Naive thymus-derived CD4-positive, alpha-beta T cell (primary cell): ENCODE measurements at regions of chr7 and their contacts with region 1.

Region 1: DNA sequence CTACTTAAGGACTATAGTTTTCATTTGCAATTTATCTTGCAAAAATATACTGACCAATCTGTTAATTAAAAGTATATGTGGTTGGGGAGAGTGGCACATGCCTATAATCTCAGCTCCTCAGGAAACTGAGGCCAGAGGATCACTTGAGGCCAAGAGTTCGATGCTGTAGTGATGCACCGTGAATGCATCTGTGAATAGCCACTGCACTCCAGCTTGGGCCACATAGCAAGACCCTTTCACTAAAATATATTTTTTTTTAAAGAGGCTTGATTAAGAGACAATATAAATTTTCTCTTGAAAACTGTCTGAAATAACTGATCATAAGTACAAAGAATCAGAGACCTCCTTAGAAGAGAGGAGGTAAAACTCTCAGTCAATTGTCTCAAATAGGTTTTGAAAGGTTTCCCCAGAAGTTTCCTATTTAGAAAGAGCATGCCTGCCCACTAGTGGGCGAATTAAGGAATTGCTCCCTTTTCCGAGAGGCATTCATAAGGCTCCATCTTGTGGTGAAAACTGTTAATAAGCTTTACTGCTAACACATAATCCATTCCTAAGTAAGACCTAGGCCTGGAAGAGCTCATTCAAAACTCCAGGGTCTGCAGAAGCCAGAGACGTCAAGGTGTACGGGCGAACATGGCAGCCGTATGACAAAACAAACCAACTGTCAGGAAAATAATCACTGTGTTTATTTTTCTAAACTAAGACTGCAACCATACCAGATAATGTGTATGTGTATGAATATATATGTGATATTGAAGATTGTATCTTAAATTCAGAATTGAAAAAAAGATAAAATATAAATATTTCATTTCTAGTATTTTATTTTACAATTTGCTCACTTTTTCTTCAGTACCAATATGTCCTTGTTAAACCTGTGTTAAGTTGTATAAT is 6.8 kb upstream of the TAS2R40 start:
- DNase-seq: peak; percentile 26 to 81 (median 75)
- ATAC-seq: peak; percentile 99
- H3K4me3 ChIP-seq: no peak overlapping the region
- H3K4me3 Mint-ChIP-seq: no peak overlapping the region
- H3K27ac ChIP-seq: no peak overlapping the region
- H3K27ac Mint-ChIP-seq: peak overlapping the region in 1 of 9 donors; percentile 13
- H3K4me1 ChIP-seq: no peaks in the 10 kb centered on the region
- H3K4me1 Mint-ChIP-seq: no peaks in the 10 kb centered on the region
- H3K27me3 ChIP-seq: no peaks in the 10 kb centered on the region
- H3K27me3 Mint-ChIP-seq: peaks cover 0 to 21% (median 4%) of the 10 kb centered on the region in 5 donors

Region 2: DNA sequence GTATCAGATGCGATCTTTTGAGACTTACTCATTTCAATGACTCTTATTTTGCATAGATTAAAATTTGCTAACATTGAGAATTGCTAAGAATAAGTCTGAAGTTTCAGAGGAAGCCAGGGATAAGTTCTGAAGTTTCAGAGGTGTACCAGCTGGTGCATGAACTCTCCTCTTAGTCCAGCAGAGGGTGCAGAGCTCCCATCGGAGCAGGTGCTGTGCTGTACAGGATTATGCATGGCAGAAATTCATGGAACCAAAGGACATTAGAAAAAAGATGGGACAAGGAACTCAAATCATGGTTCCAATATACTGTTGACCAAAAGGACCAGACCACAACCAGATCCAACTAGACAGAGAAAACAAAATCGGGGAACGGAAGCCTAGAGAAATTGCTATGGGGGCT is 1061.6 kb before region 1 on chr7:
- CTCF ChIA-PET with region 1: no interaction called
- POLR2A ChIA-PET with region 1: no interaction called
- intact Hi-C with region 1: loop called in 1 of 2 experiments (anchors 2 kb)
- DNase-seq: no peak
- ATAC-seq: no peak
- H3K4me3 ChIP-seq: no peak overlapping the region
- H3K4me3 Mint-ChIP-seq: no peak overlapping the region
- H3K27ac ChIP-seq: no peak overlapping the region
- H3K27ac Mint-ChIP-seq: no peak overlapping the region
- H3K4me1 ChIP-seq: no peaks in the 10 kb centered on the region
- H3K4me1 Mint-ChIP-seq: no peaks in the 10 kb centered on the region
- H3K27me3 ChIP-seq: no peaks in the 10 kb centered on the region
- H3K27me3 Mint-ChIP-seq: peaks cover 0 to 15% (median 5%) of the 10 kb centered on the region in 5 donors

Region 3: GRCh38 chr7:142301923-142302550 is 913.0 kb before region 1 on chr7:
- CTCF ChIA-PET with region 1: interaction called, 10 read pairs
- POLR2A ChIA-PET with region 1: no interaction called
- intact Hi-C with region 1: loop called (anchors 1 to 5 kb)
- DNase-seq: peak in 1 of 9 donors; percentile 34
- ATAC-seq: no peak
- H3K4me3 ChIP-seq: no peak overlapping the region
- H3K4me3 Mint-ChIP-seq: peak overlapping the region in 2 of 10 donors; percentile 17 to 49
- H3K27ac ChIP-seq: no peak overlapping the region
- H3K27ac Mint-ChIP-seq: no peak overlapping the region
- H3K4me1 ChIP-seq: peaks cover 0 to 28% of the 10 kb centered on the region in 2 donors
- H3K4me1 Mint-ChIP-seq: peaks cover 7 to 52% (median 35%) of the 10 kb centered on the region in 7 donors
- H3K27me3 ChIP-seq: no peaks in the 10 kb centered on the region
- H3K27me3 Mint-ChIP-seq: peaks cover 4 to 25% (median 16%) of the 10 kb centered on the region in 5 donors

Region 4: GRCh38 chr7:142438235-142438922 is 776.7 kb before region 1 on chr7:
- CTCF ChIA-PET with region 1: no interaction called
- POLR2A ChIA-PET with region 1: no interaction called
- intact Hi-C with region 1: loop called in 1 of 2 experiments (anchors 10 kb)
- DNase-seq: peak in 4 of 9 donors; percentile 25 to 37 (median 31)
- ATAC-seq: peak; percentile 71
- H3K4me3 ChIP-seq: no peak overlapping the region
- H3K4me3 Mint-ChIP-seq: peak overlapping the region in 2 of 10 donors; percentile 0 to 4
- H3K27ac ChIP-seq: no peak overlapping the region
- H3K27ac Mint-ChIP-seq: peak overlapping the region in 2 of 9 donors; percentile 8 to 11
- H3K4me1 ChIP-seq: peaks cover 6 to 26% of the 10 kb centered on the region in 2 donors
- H3K4me1 Mint-ChIP-seq: peaks cover 39 to 70% (median 66%) of the 10 kb centered on the region in 7 donors
- H3K27me3 ChIP-seq: no peaks in the 10 kb centered on the region
- H3K27me3 Mint-ChIP-seq: no peaks in the 10 kb centered on the region

Region 5: DNA sequence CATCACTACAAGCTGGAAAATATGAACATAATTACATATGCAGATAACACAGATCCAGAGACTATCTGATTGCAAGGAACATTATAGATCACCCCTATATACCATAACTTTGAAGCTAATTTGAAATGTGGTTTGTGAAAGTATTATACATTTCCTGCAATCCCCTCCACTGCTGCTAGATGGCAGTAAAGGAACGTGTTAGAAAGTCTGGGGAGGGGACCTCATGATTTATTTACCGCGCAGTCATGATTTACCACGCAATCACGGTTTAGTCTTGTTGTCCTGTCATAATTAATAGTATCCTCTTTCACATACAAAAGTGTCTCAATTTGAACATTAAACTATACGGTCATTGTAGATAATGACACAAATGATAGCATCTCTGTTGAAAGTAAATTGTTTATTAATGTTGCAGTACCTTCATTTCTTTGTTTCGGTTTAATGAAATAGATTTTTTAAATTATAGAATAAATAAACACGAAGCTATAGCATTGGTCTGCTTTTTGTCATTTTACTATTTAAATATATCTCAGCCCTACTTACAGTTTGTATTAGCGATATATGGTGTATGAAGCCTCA is 611.1 kb before region 1 on chr7:
- CTCF ChIA-PET with region 1: interaction called, 9 read pairs
- POLR2A ChIA-PET with region 1: no interaction called
- intact Hi-C with region 1: loop called (anchors 1 to 2 kb)
- DNase-seq: peak in 8 of 9 donors; percentile 34 to 67 (median 56)
- ATAC-seq: peak; percentile 82
- H3K4me3 ChIP-seq: no peak overlapping the region
- H3K4me3 Mint-ChIP-seq: peak overlapping the region in 9 of 10 donors; percentile 38 to 66 (median 55)
- H3K27ac ChIP-seq: no peak overlapping the region
- H3K27ac Mint-ChIP-seq: peak overlapping the region in 6 of 9 donors; percentile 3 to 90 (median 58)
- H3K4me1 ChIP-seq: no peaks in the 10 kb centered on the region
- H3K4me1 Mint-ChIP-seq: peaks cover 0 to 18% (median 12%) of the 10 kb centered on the region in 7 donors
- H3K27me3 ChIP-seq: no peaks in the 10 kb centered on the region
- H3K27me3 Mint-ChIP-seq: peaks cover 0 to 19% (median 0%) of the 10 kb centered on the region in 5 donors

Region 6: GRCh38 chr7:142853739-142854371 is 361.2 kb before region 1 on chr7:
- CTCF ChIA-PET with region 1: interaction called, 7 read pairs
- POLR2A ChIA-PET with region 1: no interaction called
- intact Hi-C with region 1: loop called (anchors 1 kb)
- DNase-seq: peak; percentile 56 to 74 (median 68)
- ATAC-seq: peak; percentile 88
- H3K4me3 ChIP-seq: peak overlapping the region; percentile 85
- H3K4me3 Mint-ChIP-seq: peak overlapping the region; percentile 90 to 99 (median 97)
- H3K27ac ChIP-seq: peak overlapping the region; percentile 69
- H3K27ac Mint-ChIP-seq: peak overlapping the region; percentile 37 to 92 (median 89)
- H3K4me1 ChIP-seq: peaks cover 4 to 12% of the 10 kb centered on the region in 2 donors
- H3K4me1 Mint-ChIP-seq: peaks cover 17 to 61% (median 39%) of the 10 kb centered on the region in 7 donors
- H3K27me3 ChIP-seq: no peaks in the 10 kb centered on the region
- H3K27me3 Mint-ChIP-seq: peaks cover 0 to 30% (median 0%) of the 10 kb centered on the region in 5 donors

Region 7: DNA sequence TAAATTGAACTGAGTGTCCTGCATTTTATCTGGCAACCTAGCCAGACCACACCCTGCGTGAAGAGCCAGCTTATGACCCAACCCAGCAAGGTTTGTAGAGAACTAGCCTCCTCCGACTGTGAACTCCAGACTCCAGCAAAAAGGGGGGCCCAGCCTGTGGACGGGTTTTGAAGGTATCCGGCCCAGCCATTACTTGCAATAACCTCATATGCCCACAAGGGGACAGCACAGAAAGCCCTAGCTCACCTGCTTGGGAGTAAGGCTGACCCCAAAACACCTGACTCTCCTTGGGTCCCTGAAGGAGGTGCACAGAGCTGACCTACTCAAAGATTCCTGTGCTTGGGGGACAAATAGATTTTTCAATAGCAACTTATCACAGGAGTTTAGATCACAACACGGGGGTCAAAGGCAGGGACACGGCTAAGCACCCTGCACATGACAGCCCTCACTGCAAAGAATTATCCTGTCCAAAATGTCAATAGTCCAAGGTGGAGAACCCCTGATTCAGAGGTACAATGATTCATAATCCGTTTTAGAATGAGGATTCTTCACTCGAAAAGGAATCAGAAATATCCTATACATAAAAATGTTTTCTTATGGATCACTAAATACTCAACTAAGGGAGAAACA is 334.0 kb before region 1 on chr7:
- CTCF ChIA-PET with region 1: interaction called, 3 read pairs
- POLR2A ChIA-PET with region 1: no interaction called
- intact Hi-C with region 1: loop called (anchors 1 kb)
- DNase-seq: peak; percentile 29 to 60 (median 53)
- ATAC-seq: peak; percentile 76
- H3K4me3 ChIP-seq: no peak overlapping the region
- H3K4me3 Mint-ChIP-seq: no peak overlapping the region
- H3K27ac ChIP-seq: no peak overlapping the region
- H3K27ac Mint-ChIP-seq: no peak overlapping the region
- H3K4me1 ChIP-seq: no peaks in the 10 kb centered on the region
- H3K4me1 Mint-ChIP-seq: no peaks in the 10 kb centered on the region
- H3K27me3 ChIP-seq: no peaks in the 10 kb centered on the region
- H3K27me3 Mint-ChIP-seq: peaks cover 0 to 20% (median 2%) of the 10 kb centered on the region in 5 donors